Psoas muscle (tissue), 8 donors: ENCODE measurements at regions of chr18 and their contacts with region 1.

Region 1: GRCh38 chr18:49381267-49381850 is 79.1 kb downstream of the DYM start:
- DNase-seq: no peak
- ATAC-seq: peak in 1 of 4 donors; percentile 32
- H3K4me3 ChIP-seq: no peak overlapping the region
- H3K27ac ChIP-seq: no peak overlapping the region
- H3K4me1 ChIP-seq: peaks cover 7% of the 10 kb centered on the region
- H3K27me3 ChIP-seq: no peaks in the 10 kb centered on the region
- CTCF ChIP-seq: no peak

Region 2: DNA sequence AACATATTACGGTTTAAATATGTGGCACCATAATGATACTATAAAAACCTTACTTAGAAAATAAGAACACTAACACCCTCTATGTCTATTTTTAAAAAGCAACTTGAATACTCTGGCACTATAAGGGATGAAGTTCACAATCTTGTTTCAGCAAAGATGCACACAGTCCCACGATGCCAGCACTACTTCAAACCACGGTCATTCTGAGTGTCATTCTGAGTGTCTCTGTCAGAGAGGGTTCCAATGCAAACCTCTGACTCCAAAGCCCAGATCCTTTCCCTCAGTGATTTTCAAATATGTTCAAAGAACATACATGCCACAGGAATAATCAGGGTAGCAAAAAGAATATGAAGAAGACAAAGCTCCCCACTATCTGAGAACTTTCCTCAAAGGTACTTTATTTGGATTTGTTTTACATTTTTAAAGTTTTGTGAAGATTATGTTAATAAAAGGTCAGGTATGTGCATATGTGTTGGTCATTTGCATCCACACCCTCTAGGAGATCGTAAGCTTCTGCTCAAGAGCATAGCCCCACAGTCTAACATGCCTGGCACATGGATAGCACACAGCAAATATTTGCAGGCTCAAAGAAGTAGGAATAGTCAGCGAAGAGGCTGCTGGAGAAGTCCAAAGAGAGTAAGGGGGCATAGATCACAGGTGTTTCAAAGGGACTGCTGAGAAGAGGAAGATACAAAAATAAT is 48.5 kb before region 1 on chr18:
- intact Hi-C with region 1: no loop called
- DNase-seq: no peak
- ATAC-seq: no peak
- H3K4me3 ChIP-seq: no peak overlapping the region
- H3K27ac ChIP-seq: no peak overlapping the region
- H3K4me1 ChIP-seq: no peaks in the 10 kb centered on the region
- H3K27me3 ChIP-seq: no peaks in the 10 kb centered on the region
- CTCF ChIP-seq: no peak

Region 3: DNA sequence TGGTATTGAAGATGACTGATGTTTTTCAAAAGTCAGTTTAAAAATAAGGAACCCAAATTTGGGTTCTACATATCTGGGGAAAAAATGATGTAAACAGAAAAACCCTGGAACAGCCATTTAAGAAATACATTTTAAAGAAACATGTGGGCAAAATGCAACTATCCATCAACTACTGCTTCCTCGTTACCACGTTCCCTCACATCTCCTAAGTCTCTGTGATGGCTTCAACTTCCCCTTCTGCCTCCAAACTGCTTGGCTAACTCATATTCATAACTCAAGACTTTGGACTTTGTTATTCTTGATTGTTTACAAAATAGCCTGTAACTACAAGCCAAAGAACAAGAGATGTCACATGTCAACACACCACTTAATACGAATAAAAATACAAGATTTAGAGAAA is 37.3 kb before region 1 on chr18:
- intact Hi-C with region 1: no loop called
- DNase-seq: no peak
- ATAC-seq: no peak
- H3K4me3 ChIP-seq: no peak overlapping the region
- H3K27ac ChIP-seq: no peak overlapping the region
- H3K4me1 ChIP-seq: no peaks in the 10 kb centered on the region
- H3K27me3 ChIP-seq: no peaks in the 10 kb centered on the region
- CTCF ChIP-seq: no peak

Region 4: GRCh38 chr18:49447810-49448745 is 66.7 kb after region 1 on chr18:
- intact Hi-C with region 1: loop called in 1 of 2 experiments (anchors 10 kb)
- DNase-seq: no peak
- ATAC-seq: peak; percentile 61 to 81 (median 77)
- H3K4me3 ChIP-seq: no peak overlapping the region
- H3K27ac ChIP-seq: no peak overlapping the region
- H3K4me1 ChIP-seq: peaks cover 11% of the 10 kb centered on the region
- H3K27me3 ChIP-seq: no peaks in the 10 kb centered on the region
- CTCF ChIP-seq: peak; percentile 47